PC-3 (cell line): ENCODE measurements at regions of chr3 and their contacts with region 1.

Region 1: GRCh38 chr3:71466483-71466882 is 117.0 kb downstream of the FOXP1 start:
- DNase-seq: peak; percentile 72
- ATAC-seq: peak; percentile 64
- H3K4me3 ChIP-seq: peak overlapping the region; percentile 33
- H3K27ac ChIP-seq: 0 out of 2 replicates have a peak overlapping the region, but pooled peaks have one; percentile 1
- H3K4me1 ChIP-seq: peaks cover 37% of the 10 kb centered on the region
- H3K27me3 ChIP-seq: no peaks in the 10 kb centered on the region
- CTCF ChIP-seq: no peak

Region 2: DNA sequence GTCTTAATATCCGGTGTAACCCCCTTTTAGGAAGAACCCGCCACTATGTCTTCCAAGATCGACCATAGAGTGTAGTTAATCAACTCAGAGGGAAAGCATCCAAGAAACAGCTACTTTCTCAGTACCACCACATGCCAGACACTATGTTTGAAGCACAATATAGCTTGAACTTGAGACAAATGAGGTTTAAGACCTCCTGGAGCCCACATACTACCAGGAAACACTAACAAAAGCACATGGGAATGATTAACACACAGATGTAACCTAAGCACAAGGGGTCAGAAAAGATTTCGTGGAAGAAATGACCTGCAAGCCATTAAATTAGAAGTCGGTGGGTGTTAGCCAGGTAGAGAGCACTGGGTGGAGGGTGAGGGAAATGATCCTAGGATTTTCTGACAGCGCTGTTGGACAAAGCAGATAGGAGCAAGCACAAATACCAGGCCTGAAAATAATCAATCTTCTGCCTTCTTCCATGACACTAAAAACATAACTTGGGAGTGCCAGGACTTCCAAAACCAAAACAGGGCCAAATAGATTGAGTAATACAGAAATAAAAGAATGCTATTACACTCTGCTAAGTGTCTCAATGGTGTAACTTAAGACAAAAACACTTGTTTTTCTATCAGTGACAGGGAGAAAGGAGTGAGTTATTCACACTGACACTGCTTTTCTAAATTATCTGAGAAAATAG is 96.6 kb before region 1 on chr3:
- CTCF ChIA-PET with region 1: no interaction called
- POLR2A ChIA-PET with region 1: no interaction called
- intact Hi-C with region 1: no loop called
- DNase-seq: no peak
- ATAC-seq: no peak
- H3K4me3 ChIP-seq: no peak overlapping the region
- H3K27ac ChIP-seq: no peak overlapping the region
- H3K4me1 ChIP-seq: no peaks in the 10 kb centered on the region
- H3K27me3 ChIP-seq: no peaks in the 10 kb centered on the region
- CTCF ChIP-seq: no peak

Region 3: GRCh38 chr3:71428841-71429596 is 37.5 kb before region 1 on chr3:
- CTCF ChIA-PET with region 1: no interaction called
- POLR2A ChIA-PET with region 1: no interaction called
- intact Hi-C with region 1: loop called (anchors 1 kb)
- DNase-seq: no peak
- ATAC-seq: no peak
- H3K4me3 ChIP-seq: no peak overlapping the region
- H3K27ac ChIP-seq: no peak overlapping the region
- H3K4me1 ChIP-seq: peaks cover 28% of the 10 kb centered on the region
- H3K27me3 ChIP-seq: no peaks in the 10 kb centered on the region
- CTCF ChIP-seq: no peak

Region 4: DNA sequence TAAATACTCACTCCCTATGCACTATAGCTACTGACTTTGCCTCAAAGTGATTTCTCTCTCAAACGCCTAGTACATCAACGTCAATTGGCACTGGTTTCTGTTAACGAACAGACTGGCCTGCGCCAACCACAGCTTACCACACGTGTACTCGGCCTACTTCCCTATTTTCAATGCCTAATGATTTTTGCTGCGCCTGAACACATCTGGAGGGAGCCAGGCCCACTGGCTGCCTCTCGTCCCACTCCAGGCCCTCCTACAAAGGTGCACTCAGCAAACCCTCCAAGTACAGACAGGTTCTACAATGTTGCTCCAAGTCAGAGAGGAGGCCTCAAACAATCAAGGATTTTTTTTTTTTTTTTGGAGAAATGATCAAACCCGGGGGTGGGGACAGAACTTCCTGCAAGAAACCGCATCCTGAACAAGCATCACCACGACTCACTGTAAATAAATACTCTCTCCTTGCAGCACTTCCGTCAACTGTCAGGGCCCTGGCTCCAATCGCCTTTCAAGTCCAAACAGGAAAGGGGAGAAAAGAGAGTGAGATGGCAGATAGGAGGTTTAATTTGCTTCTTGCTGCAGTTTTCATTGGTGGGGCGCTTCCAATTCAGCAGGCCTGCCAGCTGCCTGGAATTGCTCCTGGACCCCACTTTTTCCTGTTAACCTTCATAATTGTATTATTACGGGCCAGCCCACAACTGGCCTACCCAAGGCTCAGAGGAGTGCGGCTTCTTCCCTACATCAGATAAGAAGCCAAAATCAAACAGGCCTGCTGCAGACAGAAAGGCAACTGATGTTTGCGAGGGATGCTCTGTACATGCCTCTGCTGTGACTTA is 22.2 kb before region 1 on chr3:
- CTCF ChIA-PET with region 1: no interaction called
- POLR2A ChIA-PET with region 1: no interaction called
- intact Hi-C with region 1: loop called (anchors 2 kb)
- DNase-seq: peak; percentile 91
- ATAC-seq: peak; percentile 89
- H3K4me3 ChIP-seq: peak overlapping the region; percentile 14; the same call in 1 of the 2 replicates
- H3K27ac ChIP-seq: peak overlapping the region; percentile 82
- H3K4me1 ChIP-seq: peaks cover 22% of the 10 kb centered on the region
- H3K27me3 ChIP-seq: no peaks in the 10 kb centered on the region
- CTCF ChIP-seq: no peak

Region 5: DNA sequence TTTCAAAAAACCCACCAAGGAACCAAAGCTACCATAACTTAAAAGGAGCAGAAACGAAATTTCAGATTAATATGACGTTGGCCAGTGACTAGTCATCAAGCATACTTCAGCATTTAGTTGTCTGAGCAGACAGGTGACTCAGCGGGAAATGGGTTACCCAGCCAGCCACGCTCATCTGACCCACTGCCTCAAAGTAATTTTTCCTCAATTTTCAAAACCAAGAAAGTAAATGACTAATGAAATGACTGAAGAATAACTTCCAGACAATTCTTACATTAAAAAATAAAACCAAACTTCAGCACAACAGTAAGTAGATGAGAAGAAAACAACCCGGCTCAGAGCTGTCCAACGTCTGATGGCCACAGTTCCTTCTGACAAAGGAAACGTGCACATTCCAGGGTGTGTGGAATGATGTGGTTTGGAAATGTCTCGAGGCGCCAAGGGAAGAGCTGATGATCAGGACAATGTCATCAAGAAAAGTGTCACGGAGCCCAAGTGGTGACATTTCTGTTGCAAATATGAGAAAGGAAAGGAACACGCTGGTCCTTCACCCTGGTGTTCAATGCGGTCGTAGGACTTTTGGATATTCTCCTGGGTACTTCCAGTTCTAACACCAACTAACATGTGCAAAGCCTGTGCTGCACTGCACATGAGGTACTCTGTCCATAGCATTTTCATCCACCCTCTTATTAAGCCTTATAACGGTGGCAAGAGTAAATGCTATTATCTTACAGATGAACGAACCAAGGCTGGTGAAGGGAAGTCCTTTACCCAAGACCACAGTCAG is 38.0 kb after region 1 on chr3:
- CTCF ChIA-PET with region 1: no interaction called
- POLR2A ChIA-PET with region 1: no interaction called
- intact Hi-C with region 1: loop called (anchors 5 kb)
- DNase-seq: peak; percentile 92
- ATAC-seq: peak; percentile 97
- H3K4me3 ChIP-seq: peak overlapping the region; percentile 57
- H3K27ac ChIP-seq: peak overlapping the region; percentile 89
- H3K4me1 ChIP-seq: peaks cover 22% of the 10 kb centered on the region
- H3K27me3 ChIP-seq: no peaks in the 10 kb centered on the region
- CTCF ChIP-seq: no peak

Region 6: GRCh38 chr3:71537211-71537611 is 70.7 kb after region 1 on chr3:
- CTCF ChIA-PET with region 1: no interaction called
- POLR2A ChIA-PET with region 1: interaction called, 3 read pairs
- intact Hi-C with region 1: loop called (anchors 2 kb)
- DNase-seq: peak; percentile 78
- ATAC-seq: peak; percentile 3; the same call in 1 of the 2 replicates
- H3K4me3 ChIP-seq: no peak overlapping the region
- H3K27ac ChIP-seq: peak overlapping the region; percentile 23
- H3K4me1 ChIP-seq: peaks cover 52% of the 10 kb centered on the region
- H3K27me3 ChIP-seq: no peaks in the 10 kb centered on the region
- CTCF ChIP-seq: no peak

Region 7: GRCh38 chr3:71681224-71681668 is 214.8 kb after region 1 on chr3:
- CTCF ChIA-PET with region 1: interaction called, 3 read pairs
- POLR2A ChIA-PET with region 1: no interaction called
- intact Hi-C with region 1: loop called (anchors 10 kb)
- DNase-seq: peak; percentile 80
- ATAC-seq: peak; percentile 74
- H3K4me3 ChIP-seq: peak overlapping the region; percentile 42; the same call in 1 of the 2 replicates
- H3K27ac ChIP-seq: peak overlapping the region; percentile 7; the same call in 1 of the 2 replicates
- H3K4me1 ChIP-seq: peaks cover 25% of the 10 kb centered on the region
- H3K27me3 ChIP-seq: no peaks in the 10 kb centered on the region
- CTCF ChIP-seq: peak; percentile 96